Adrenal gland (tissue), 19 donors: ENCODE measurements at regions of chr4 and their contacts with region 1.

Region 1: DNA sequence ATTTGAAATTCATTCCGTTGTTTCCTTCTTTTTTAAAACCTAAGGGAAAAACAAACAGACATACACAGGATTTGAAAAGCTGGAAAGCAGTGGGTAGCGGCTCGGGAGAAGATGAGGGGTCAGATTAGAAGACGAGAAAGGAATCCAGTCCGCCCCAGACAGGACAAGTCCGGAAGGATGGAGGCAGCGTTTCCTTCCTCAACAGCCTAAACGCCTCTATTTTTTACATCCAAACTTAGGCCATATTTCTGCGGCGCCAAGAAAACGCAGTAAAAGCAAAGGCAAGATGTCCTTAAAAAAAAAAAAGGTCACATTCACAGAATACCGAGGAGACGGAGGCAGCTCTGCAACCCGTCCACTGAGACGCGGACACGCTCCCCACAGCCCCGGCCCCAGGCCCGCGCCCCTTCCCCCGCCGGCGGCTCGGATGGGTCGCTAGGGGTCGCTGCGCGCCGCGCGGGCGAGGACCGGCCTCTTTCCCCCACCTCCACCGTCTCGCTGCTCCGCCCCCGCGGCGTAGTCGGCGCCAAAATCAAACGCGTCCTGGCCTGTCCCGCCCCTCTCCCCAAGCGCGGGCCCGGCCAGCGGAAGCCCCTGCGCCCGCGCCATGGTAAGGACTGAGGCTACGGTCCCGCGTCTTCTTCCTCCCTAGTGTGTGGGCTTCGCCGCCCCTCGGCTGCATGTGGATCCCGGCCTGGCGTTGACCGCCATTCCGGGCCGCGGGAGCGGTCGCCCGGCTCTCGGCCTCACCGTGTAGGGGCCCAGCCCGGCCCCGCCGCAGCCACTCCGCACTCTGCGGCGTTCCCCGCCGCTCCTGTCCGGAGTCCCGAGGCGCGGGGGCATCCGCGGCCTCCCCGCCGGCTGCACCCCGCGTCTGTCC is at the start of gene MND1:
- DNase-seq: peak; percentile 72 to 88 (median 83)
- H3K4me3 ChIP-seq: peak within 1 kb of the TSS; percentile 32 to 74 (median 50)
- H3K27ac ChIP-seq: no peak within 1 kb of the TSS
- H3K4me1 ChIP-seq: peaks cover 0 to 13% of the 10 kb centered on the region in 2 donors
- H3K27me3 ChIP-seq: no peaks in the 10 kb centered on the region
- CTCF ChIP-seq: peak; percentile 67 to 98 (median 76)
- POLR2A ChIP-seq: no peak
- total RNA-seq, gene MND1: 0.36 to 9.5 (median 0.64) TPM in 6 of 9 donors, not detected in the others

Region 2: GRCh38 chr4:153432968-153433753 is 88.8 kb after region 1 on chr4:
- intact Hi-C with region 1: loop called in 1 of 2 experiments (anchors 10 kb)
- DNase-seq: peak; percentile 68 to 92 (median 87)
- H3K4me3 ChIP-seq: peak overlapping the region in 1 of 4 donors; percentile 12
- H3K27ac ChIP-seq: peak overlapping the region in 3 of 5 donors; percentile 51 to 66 (median 54)
- H3K4me1 ChIP-seq: peaks cover 0 to 3% of the 10 kb centered on the region in 2 donors
- H3K27me3 ChIP-seq: no peaks in the 10 kb centered on the region
- CTCF ChIP-seq: peak; percentile 47 to 95 (median 84)
- POLR2A ChIP-seq: peak in 1 of 2 donors; percentile 8

Region 3: DNA sequence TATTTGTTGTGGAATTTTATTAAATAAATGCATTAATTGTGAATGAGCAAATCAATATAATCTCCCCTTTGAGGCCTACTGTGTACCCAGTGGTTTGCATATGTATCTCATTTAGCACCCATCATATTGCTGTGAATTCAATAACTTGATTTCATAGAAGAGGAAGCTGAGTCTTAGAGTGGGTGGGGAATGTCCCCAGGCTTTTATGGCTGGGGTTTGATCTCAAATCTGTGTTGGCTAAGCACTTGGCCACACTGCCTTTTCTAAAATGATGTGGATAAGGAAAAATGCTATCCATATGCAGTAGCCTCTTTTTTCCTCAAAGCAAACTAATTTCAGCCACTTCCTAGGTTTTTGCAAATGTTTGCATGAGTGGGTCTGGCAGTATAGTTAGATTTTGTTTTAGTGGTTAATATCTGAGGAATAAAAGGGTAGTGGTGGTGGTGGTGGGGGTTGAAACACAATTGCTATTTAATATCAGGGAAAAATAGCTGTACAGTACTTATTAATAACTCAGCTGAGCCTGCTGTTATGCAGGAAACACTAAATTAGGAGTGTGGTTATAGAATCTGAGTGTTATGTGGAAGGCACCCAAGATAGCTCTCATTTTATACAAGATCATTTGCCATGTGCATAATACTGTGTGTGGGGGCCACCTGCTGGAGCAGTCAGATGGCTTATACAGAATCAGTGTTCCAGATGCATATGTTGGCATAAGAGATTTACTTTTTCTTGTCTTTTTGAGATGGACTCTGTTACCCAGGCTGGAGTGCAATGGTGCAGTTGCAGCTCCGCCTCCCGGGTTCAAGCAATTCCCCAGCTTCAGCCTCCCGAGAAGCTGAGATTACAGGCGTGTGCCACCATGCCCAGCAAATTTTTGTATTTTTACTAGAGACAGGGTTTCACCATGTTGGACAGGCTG is 229.8 kb after region 1 on chr4:
- intact Hi-C with region 1: loop called (anchors 2 to 5 kb)
- DNase-seq: peak; percentile 49 to 85 (median 61)
- H3K4me3 ChIP-seq: no peak overlapping the region
- H3K27ac ChIP-seq: no peak overlapping the region
- H3K4me1 ChIP-seq: peaks cover 0 to 18% of the 10 kb centered on the region in 2 donors
- H3K27me3 ChIP-seq: no peaks in the 10 kb centered on the region
- CTCF ChIP-seq: peak; percentile 28 to 67 (median 58)
- POLR2A ChIP-seq: no peak